ENCODE measurements at regions of chr1 and their contacts with region 1.

Region 1: GRCh38 chr1:154220071-154220969 is at the start of gene UBAP2L:
- DNase-seq: peak; percentile 99
- ATAC-seq: peak; percentile 92
- H3K4me3 Mint-ChIP-seq: peak within 1 kb of the TSS; percentile 99
- H3K27ac Mint-ChIP-seq: peak within 1 kb of the TSS; percentile 100
- H3K4me1 Mint-ChIP-seq: peaks cover 70% of the 10 kb centered on the region
- H3K27me3 Mint-ChIP-seq: no peaks in the 10 kb centered on the region
- total RNA-seq, gene UBAP2L: 205 to 255 TPM

Region 2: DNA sequence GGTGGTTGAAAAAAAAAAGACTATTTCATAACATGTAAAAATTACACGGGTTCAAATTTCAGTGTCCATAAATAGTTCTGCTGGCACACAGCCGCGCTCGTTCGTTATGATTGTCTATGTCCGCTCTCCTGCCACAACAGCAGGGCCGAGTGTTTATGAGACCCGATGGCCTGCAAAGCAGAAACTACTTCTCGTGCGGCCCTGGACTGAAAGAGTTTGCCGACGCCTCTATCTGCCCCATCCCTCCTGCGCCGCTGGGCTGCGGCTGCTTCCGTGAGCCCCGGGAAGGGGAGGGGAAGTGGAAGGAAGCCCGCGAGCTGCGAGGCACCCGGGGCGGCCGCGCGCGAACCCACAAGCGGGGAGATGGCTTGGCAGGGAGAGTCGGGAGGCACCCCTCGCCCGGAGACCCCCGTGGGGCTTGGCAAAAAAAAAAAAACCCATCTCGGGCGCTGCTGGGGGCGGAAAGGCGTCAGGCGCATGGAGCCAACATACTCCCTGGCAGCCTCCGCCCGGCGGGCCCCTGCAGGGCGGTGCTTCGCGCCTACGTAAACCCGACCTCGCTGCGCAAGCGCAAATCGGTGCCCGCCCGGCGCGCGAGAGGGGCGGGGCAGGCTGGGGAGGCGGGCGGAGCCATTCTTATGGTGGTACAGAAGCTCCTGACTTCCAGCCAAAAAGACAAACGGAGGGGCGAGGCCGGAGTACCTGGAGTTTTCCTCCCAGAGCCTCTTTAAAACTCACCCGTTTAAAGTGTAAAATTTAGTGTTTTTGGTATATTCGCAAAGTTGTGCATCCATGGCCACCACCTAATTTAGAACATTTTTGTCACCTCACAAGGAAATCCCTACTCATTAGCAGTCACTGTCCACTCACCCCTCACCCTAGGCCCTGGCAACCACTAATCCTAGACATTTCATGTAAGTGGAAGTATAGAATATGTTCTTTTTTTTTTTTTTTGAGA is 436.8 kb before region 1 on chr1:
- CTCF ChIA-PET with region 1: interaction called, 4 read pairs
- POLR2A ChIA-PET with region 1: no interaction called
- intact Hi-C with region 1: loop called in 1 of 2 experiments (anchors 2 kb)
- DNase-seq: peak; percentile 95
- ATAC-seq: peak; percentile 96
- H3K4me3 Mint-ChIP-seq: peak overlapping the region; percentile 90
- H3K27ac Mint-ChIP-seq: peak overlapping the region; percentile 97
- H3K4me1 Mint-ChIP-seq: peaks cover 12% of the 10 kb centered on the region
- H3K27me3 Mint-ChIP-seq: no peaks in the 10 kb centered on the region

Region 3: GRCh38 chr1:153967082-153968000 is 253.0 kb before region 1 on chr1 and contains the start of gene CREB3L4:
- CTCF ChIA-PET with region 1: interaction called, 4 read pairs
- POLR2A ChIA-PET with region 1: no interaction called
- intact Hi-C with region 1: loop called in 1 of 2 experiments (anchors 1 kb)
- DNase-seq: peak; percentile 91
- ATAC-seq: peak; percentile 87
- H3K4me3 Mint-ChIP-seq: peak within 1 kb of the TSS; percentile 96
- H3K27ac Mint-ChIP-seq: peak within 1 kb of the TSS; percentile 96
- H3K4me1 Mint-ChIP-seq: peaks cover 38% of the 10 kb centered on the region
- H3K27me3 Mint-ChIP-seq: no peaks in the 10 kb centered on the region
- total RNA-seq, gene CREB3L4: 8.5 to 9.1 TPM

Region 4: DNA sequence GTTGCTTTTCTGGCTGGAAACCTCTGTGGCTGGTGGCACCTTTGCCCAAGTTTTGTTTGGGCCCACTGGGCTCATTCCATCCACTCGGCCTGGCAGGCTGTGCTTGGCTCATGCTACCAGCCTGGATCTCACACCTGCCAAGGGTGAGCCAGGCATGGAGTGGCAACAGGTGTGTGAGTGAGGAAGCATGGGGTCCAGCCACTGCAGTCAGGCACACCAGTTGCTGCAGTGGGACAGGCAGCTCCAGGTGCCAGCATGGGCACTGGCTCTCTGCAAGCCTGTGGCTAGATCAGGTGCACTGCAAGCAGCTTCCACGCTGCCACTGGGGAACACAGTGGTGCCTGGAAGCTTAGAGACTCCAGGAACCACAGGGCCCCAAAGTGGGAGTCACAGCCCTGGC is 122.4 kb before region 1 on chr1:
- CTCF ChIA-PET with region 1: no interaction called
- POLR2A ChIA-PET with region 1: no interaction called
- intact Hi-C with region 1: no loop called
- DNase-seq: no peak
- ATAC-seq: no peak
- H3K4me3 Mint-ChIP-seq: no peak overlapping the region
- H3K27ac Mint-ChIP-seq: no peak overlapping the region
- H3K4me1 Mint-ChIP-seq: no peaks in the 10 kb centered on the region
- H3K27me3 Mint-ChIP-seq: no peaks in the 10 kb centered on the region

Region 5: DNA sequence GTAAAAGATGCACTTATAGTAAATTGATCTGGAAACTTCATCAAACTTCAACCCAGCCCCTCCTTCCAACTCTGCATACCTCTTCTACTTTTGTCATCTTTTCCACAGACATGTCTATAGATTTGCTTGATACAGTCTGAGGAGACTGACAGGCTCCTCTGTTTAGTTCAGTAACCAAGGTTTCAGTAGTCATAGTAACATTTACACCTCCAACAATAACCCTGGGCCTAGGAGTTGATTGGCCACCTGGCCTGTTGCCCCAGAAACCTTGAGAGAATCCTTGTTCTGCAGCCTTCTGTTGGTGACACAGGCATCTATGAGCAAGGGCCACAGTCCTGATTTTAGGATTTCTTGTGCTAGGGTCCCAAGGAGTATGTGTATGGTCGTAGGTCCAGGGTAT is 14.1 kb before region 1 on chr1 and contains the start of gene CFAP141:
- CTCF ChIA-PET with region 1: interaction called, 3 read pairs
- POLR2A ChIA-PET with region 1: interaction called, 3 read pairs
- intact Hi-C with region 1: loop called (anchors 1 kb)
- DNase-seq: peak; percentile 40
- ATAC-seq: peak; percentile 89
- H3K4me3 Mint-ChIP-seq: no peak within 1 kb of the TSS
- H3K27ac Mint-ChIP-seq: peak within 1 kb of the TSS; percentile 72
- H3K4me1 Mint-ChIP-seq: peaks cover 45% of the 10 kb centered on the region
- H3K27me3 Mint-ChIP-seq: no peaks in the 10 kb centered on the region
- total RNA-seq, gene CFAP141: not detected

Region 6: GRCh38 chr1:154324669-154325582 is 104.6 kb after region 1 on chr1 and contains the start of gene ATP8B2:
- CTCF ChIA-PET with region 1: interaction called, 3 read pairs
- POLR2A ChIA-PET with region 1: interaction called, 3 read pairs
- intact Hi-C with region 1: loop called in 1 of 2 experiments (anchors 1 kb)
- DNase-seq: peak; percentile 92
- ATAC-seq: peak; percentile 70
- H3K4me3 Mint-ChIP-seq: peak within 1 kb of the TSS; percentile 99
- H3K27ac Mint-ChIP-seq: peak within 1 kb of the TSS; percentile 94
- H3K4me1 Mint-ChIP-seq: peaks cover 39% of the 10 kb centered on the region
- H3K27me3 Mint-ChIP-seq: no peaks in the 10 kb centered on the region
- total RNA-seq, gene ATP8B2: 48.2 TPM

Region 7: GRCh38 chr1:154819628-154820590 is 599.6 kb after region 1 on chr1:
- CTCF ChIA-PET with region 1: no interaction called
- POLR2A ChIA-PET with region 1: no interaction called
- intact Hi-C with region 1: no loop called
- DNase-seq: peak; percentile 51
- ATAC-seq: peak; percentile 72
- H3K4me3 Mint-ChIP-seq: no peak overlapping the region
- H3K27ac Mint-ChIP-seq: no peak overlapping the region
- H3K4me1 Mint-ChIP-seq: no peaks in the 10 kb centered on the region
- H3K27me3 Mint-ChIP-seq: no peaks in the 10 kb centered on the region

Region 8: GRCh38 chr1:155084722-155085503 is 864.6 kb after region 1 on chr1:
- CTCF ChIA-PET with region 1: no interaction called
- POLR2A ChIA-PET with region 1: no interaction called
- intact Hi-C with region 1: loop called in 1 of 2 experiments (anchors 5 kb)
- DNase-seq: peak; percentile 97
- ATAC-seq: peak; percentile 78
- H3K4me3 Mint-ChIP-seq: peak overlapping the region; percentile 82
- H3K27ac Mint-ChIP-seq: peak overlapping the region; percentile 91
- H3K4me1 Mint-ChIP-seq: peaks cover 36% of the 10 kb centered on the region
- H3K27me3 Mint-ChIP-seq: peaks cover 27% of the 10 kb centered on the region

Measured in activated CD4-positive, alpha-beta T cell treated with anti-CD3 and anti-CD28 coated beads for 36 hours (primary cell).